Calu3 (cell line): ENCODE measurements at regions of chr10 and their contacts with region 1.

Region 1: DNA sequence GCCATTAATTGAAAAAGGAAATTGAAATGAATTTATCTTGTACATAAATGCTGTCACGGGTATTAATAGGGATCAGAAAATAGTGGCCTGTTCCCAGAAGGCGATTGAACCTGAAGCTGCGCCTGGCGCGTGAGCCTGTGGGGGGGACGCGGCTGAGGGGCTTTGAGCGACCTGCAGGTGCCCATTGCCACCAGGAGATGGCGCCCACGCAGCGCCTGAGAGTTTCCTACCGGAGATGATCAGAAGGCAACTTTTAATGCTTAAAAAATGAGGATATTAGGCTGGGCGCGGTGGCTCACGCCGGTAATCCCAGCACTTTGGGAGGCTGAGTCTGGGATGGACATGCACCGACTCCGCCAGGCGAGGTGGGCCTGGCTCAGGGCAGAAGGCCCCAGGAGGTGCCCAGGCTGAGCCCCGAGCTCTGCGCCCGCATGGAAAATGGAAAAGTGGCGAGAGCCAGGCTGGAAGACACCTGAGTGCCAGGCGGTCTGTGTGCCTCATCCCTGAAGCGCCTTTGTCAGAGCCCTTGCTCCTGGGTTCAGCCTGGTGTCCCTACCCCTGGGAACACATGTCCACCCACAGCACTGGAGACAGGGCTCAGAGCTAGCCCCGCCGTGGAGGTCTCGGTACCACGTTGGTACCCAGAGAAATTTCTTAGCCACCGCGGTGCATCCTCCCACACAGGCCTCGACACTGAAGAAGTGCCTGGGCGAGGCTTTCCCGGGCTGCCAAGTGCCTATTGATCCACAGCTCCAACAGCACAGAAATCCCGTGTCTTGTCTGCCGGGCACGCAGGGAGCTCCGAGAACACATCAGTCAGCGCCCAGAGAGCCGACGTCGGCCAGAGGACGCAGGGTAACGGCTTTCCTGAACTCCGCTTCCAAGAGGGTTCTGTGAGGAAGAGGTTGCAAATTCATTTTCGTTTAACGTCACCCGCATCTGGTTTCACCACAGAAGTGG is 117.4 kb downstream of the INPP5A start:
- DNase-seq: peak; percentile 59
- H3K4me3 Mint-ChIP-seq: no peak overlapping the region
- H3K27ac Mint-ChIP-seq: peak overlapping the region; percentile 52
- H3K4me1 Mint-ChIP-seq: no peaks in the 10 kb centered on the region
- H3K27me3 Mint-ChIP-seq: no peaks in the 10 kb centered on the region
- CTCF ChIP-seq: peak; percentile 80

Region 2: GRCh38 chr10:132886211-132887099 is 231.5 kb after region 1 on chr10:
- CTCF ChIA-PET with region 1: no interaction called
- intact Hi-C with region 1: loop called (anchors 2 kb)
- DNase-seq: peak; percentile 33
- H3K4me3 Mint-ChIP-seq: no peak overlapping the region
- H3K27ac Mint-ChIP-seq: no peak overlapping the region
- H3K4me1 Mint-ChIP-seq: no peaks in the 10 kb centered on the region
- H3K27me3 Mint-ChIP-seq: peaks cover 84% of the 10 kb centered on the region
- CTCF ChIP-seq: no peak

Region 3: DNA sequence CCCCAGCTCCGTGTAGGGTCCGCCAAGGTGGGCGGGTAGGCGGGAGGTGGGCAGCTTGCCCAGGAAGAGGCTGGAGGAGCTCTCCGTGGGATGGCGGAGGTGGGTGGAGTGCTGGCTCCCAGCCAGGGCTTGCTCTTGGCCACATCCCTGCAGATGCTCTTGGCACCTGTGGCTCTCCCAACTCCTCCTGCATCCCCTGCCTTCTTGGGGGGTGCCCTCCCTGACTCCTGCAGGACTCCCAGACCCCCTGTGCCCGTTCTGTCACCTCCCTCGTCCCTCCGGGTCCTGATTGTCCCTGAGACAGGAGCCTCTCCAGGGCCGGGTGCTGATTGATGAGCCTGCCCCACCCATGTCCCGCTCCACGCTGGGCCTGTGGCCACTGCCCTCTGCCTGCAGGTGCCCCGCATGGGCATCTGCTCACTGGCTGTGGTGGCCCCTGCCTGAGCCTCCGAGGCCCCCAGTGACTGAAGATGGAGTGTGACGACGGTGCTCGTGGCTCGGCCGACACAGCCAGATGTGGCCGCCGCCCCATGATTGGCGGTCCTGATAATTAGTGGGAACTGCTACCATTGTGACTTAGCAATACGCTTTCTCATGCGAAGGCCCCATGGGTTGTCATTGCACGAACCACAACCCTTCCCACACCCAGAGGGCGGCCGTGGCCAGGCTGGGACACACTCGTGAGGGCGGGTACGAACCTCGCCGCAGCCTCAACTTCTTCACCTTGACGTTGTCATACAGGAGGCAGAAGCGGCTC is 263.8 kb after region 1 on chr10:
- CTCF ChIA-PET with region 1: no interaction called
- intact Hi-C with region 1: no loop called
- DNase-seq: no peak
- H3K4me3 Mint-ChIP-seq: no peak overlapping the region
- H3K27ac Mint-ChIP-seq: no peak overlapping the region
- H3K4me1 Mint-ChIP-seq: no peaks in the 10 kb centered on the region
- H3K27me3 Mint-ChIP-seq: no peaks in the 10 kb centered on the region
- CTCF ChIP-seq: no peak

Region 4: GRCh38 chr10:132939957-132940790 is 285.2 kb after region 1 on chr10:
- CTCF ChIA-PET with region 1: no interaction called
- intact Hi-C with region 1: no loop called
- DNase-seq: peak; percentile 69
- H3K4me3 Mint-ChIP-seq: no peak overlapping the region
- H3K27ac Mint-ChIP-seq: no peak overlapping the region
- H3K4me1 Mint-ChIP-seq: no peaks in the 10 kb centered on the region
- H3K27me3 Mint-ChIP-seq: peaks cover 42% of the 10 kb centered on the region
- CTCF ChIP-seq: peak; percentile 71